Activated CD4-positive, alpha-beta T cell treated with anti-CD3 and anti-CD28 coated beads, Interleukin-2, amount 10 ng/mL, durations not matched to agents 7 days and 5 days (primary cell): ENCODE measurements at regions of chr11 and their contacts with region 1.

Region 1: DNA sequence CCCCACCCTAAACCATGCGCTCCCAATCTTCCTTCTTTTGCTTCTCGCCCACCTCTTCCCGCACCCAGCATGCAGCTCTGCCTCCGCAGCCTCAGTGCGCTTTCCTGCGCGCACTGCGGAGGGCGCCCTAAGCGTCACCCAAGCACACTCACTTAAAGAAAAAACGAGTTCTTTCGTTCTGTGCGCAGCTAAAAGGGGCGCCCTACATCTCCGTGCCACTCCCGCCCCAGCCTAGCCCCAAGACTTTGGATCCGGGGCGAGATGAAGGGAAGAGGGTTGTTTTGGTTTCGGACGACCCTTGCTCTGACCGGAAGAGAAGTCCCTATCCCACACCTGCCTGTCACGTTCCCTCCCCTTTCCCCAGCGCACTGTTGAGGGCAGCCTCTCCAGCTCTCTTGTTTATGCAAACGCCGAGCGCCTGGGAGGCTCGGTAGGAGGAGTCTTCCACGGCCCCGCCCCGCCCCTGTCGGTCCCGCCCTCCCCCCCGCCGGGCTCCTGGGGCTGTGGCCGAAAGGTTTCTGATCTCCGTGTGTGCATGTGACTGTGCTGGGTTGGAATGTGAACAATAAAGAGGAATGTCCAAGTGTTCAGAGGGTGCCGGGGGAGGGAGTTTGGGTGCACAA is 5.3 kb downstream of the VSIG2 start:
- DNase-seq: peak; percentile 79
- H3K4me3 Mint-ChIP-seq: peak overlapping the region; percentile 85
- H3K27ac Mint-ChIP-seq: peak overlapping the region; percentile 92
- H3K4me1 Mint-ChIP-seq: peaks cover 38% of the 10 kb centered on the region
- H3K27me3 Mint-ChIP-seq: peaks cover 7% of the 10 kb centered on the region

Region 2: GRCh38 chr11:124481365-124482323 is 265.1 kb before region 1 on chr11:
- CTCF ChIA-PET with region 1: no interaction called
- POLR2A ChIA-PET with region 1: no interaction called
- DNase-seq: no peak
- H3K4me3 Mint-ChIP-seq: peak overlapping the region; percentile 46
- H3K27ac Mint-ChIP-seq: no peak overlapping the region
- H3K4me1 Mint-ChIP-seq: peaks cover 11% of the 10 kb centered on the region
- H3K27me3 Mint-ChIP-seq: peaks cover 17% of the 10 kb centered on the region

Region 3: DNA sequence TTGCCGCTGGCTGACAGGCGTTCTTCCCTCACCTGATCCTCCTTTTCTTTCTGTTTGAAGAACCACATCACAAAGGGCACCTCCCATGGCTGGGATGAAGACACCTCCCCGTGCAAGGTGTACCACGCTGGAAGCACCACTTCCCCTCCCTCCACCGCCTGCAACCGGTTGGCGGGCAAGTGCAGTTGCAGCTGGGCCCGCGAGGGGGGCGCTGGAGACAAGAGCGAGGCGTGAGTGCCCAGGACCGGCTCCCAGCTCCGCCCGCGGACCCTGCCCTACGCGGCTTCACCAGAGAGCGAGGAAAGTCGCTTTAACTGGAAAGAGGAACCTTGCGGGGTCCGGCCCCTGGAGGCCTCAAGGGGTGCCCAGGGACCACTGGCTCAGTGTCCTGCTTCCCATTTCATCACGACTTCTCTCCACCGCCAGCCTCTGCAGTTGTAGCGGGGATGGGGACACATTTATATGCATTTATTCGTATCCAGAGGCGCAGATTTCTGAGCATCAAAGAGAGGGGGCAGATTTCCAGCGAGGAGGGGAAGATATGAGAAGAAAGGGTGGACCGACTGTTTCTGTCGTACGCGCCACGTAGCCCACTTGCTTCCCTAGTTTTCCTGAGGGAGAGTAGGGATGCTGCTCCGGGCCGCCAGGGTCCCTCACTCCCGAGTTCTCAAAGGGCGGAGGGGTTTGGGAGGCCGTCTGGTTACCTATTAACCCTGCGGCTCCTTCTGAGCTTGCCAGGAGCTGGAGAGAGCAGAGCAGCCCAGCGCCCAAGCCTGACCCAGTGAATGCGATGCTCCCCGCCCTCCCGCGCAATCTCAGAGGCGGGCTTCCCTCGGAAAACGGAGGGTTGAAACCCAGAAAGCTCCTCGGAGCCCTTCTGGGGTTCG is 11.8 kb after region 1 on chr11:
- CTCF ChIA-PET with region 1: interaction called, 21 read pairs
- POLR2A ChIA-PET with region 1: no interaction called
- DNase-seq: peak; percentile 67
- H3K4me3 Mint-ChIP-seq: peak overlapping the region; percentile 38
- H3K27ac Mint-ChIP-seq: no peak overlapping the region
- H3K4me1 Mint-ChIP-seq: peaks cover 23% of the 10 kb centered on the region
- H3K27me3 Mint-ChIP-seq: peaks cover 50% of the 10 kb centered on the region

Region 4: GRCh38 chr11:124800226-124800929 is 53.6 kb after region 1 on chr11 and contains the start of gene MSANTD2:
- CTCF ChIA-PET with region 1: interaction called, 12 read pairs
- POLR2A ChIA-PET with region 1: no interaction called
- DNase-seq: peak; percentile 76
- H3K4me3 Mint-ChIP-seq: peak within 1 kb of the TSS; percentile 86
- H3K27ac Mint-ChIP-seq: peak within 1 kb of the TSS; percentile 94
- H3K4me1 Mint-ChIP-seq: peaks cover 34% of the 10 kb centered on the region
- H3K27me3 Mint-ChIP-seq: no peaks in the 10 kb centered on the region
- total RNA-seq, gene MSANTD2: 9.5 to 10.5 TPM